Activated B cell treated with CpG ODN at 0.5 μM for 24 hours (primary cell): ENCODE measurements at regions of chr14 and their contacts with region 1.

Region 1: DNA sequence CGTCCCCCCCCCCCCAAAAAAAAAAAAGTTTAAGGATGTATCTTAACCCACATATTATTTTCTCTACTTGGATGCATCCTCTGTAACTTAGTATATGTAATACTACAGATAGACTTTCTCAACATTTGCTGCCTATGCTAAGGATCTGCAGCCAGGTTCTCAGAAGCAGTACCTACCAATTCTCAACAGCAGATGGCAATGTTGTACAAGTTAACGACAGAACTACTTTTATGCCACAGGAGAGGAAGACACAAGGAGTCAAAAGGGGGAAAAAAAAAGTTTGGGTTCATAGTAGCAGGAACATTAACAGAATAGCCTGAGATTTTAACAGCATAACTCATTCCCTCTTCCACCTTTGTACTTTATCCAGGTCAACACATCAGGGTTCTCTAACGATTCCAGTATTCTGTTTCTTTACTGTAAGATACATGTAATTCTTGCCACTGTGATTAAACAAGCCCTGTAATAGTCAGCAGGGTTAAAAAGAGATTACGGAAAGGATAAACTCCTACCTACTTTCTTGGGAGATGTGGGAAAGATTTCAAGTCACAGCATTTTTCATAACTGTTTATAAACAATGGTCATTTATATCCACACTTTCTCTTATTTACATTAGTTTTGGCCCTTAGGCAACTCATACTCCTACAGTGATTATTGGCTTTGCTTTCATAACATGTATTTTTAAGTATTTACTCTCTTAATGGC is 5.7 kb upstream of the NEK9 start:
- DNase-seq: no peak
- ATAC-seq: peak; percentile 87
- H3K4me3 Mint-ChIP-seq: no peak overlapping the region
- H3K27ac Mint-ChIP-seq: no peak overlapping the region
- H3K4me1 Mint-ChIP-seq: peaks cover 16% of the 10 kb centered on the region
- H3K27me3 Mint-ChIP-seq: no peaks in the 10 kb centered on the region
- CTCF ChIP-seq: peak; percentile 51

Region 2: DNA sequence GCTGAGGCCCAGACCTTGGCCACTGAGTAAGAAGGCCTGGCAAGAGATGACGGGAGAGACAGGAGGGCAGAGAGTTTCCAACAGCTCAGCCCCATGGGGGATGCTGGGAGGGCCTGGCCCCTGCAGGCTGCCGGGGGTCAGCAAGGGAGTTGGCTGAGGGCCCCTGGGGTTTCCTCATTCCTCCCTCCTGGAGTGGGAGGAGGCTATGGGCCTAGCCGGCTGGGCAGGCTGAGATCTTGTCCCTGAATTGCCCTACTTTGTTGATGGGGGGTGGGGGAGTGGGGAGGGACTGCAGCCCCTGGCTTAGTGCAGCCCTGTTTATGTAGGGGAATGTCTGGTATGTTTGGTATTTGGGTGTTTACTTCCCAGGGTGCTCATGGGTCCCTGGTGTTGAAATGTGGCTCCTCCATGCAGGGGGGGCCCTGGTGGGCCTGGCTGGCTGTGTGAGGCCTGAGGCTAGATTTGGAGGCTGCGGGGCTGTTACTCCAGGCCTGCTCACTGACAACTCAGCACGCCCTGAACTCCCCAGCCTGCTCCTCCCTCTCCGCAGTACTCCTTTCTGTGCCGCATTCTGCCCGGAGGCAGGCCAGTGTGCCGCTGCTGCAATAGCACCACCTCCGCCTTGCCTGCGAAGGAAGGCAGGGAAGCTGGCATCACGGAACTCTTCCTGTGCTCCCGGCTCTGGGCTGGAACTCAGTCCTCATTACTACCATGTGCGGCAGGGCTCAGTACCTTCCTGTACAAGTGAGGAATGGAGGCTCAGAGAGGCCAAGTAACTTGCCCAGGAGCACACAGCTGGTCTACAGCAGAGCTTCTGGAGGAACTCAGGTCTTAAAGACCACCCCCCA is 320.6 kb after region 1 on chr14:
- CTCF ChIA-PET with region 1: interaction called, 4 read pairs
- POLR2A ChIA-PET with region 1: interaction called, 6 read pairs
- intact Hi-C with region 1: loop called (anchors 1 kb)
- DNase-seq: no peak
- ATAC-seq: no peak
- H3K4me3 Mint-ChIP-seq: no peak overlapping the region
- H3K27ac Mint-ChIP-seq: no peak overlapping the region
- H3K4me1 Mint-ChIP-seq: peaks cover 4% of the 10 kb centered on the region
- H3K27me3 Mint-ChIP-seq: no peaks in the 10 kb centered on the region
- CTCF ChIP-seq: no peak

Region 3: GRCh38 chr14:75577729-75578101 is 445.2 kb after region 1 on chr14:
- CTCF ChIA-PET with region 1: no interaction called
- POLR2A ChIA-PET with region 1: no interaction called
- intact Hi-C with region 1: loop called (anchors 5 kb)
- DNase-seq: peak; percentile 60
- ATAC-seq: peak; percentile 85
- H3K4me3 Mint-ChIP-seq: peak overlapping the region; percentile 89
- H3K27ac Mint-ChIP-seq: peak overlapping the region; percentile 72
- H3K4me1 Mint-ChIP-seq: peaks cover 29% of the 10 kb centered on the region
- H3K27me3 Mint-ChIP-seq: peaks cover 3% of the 10 kb centered on the region
- CTCF ChIP-seq: peak; percentile 36